ENCODE measurements at regions of chr17 and their contacts with region 1.

Region 1: DNA sequence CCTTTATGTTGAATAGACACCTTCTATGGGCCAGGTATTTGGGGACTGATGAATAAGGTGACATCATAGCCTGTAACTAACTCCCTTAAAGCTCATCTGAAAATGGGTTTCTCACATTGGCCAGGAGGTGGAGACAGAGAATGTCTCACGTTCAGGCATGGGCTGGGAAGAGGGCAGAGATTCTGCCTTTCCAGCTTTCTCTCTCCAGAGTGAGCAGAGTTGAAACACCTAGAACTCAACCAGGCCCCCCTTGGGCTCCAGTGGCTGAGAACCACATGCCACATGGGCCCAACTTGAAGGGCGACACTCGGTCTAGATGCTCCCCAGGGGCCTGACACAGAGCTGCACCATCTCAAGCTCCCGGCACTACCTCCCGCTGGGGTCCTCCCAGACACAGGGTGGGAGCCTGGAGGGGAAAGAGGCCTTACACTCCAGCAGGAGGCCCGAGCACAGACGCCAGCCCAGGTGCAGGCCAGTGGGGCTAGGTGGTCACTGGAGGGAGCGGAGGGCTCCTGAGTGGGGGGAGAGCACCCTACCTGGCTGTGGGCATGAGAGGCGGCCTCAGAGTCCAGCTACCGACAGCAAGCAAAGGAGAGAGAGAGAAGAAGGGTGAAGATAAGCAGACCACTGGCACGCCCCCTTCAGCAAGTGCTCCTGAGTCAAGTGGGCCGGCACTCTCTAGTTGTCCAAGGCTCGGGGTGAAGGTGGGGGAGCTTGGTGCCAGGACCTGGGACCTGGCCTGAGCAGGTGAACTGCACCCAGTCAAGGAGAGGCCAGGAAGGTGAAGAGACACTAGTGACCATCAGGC is 55.9 kb downstream of the MYO18A start:
- DNase-seq: peak; percentile 79
- CTCF ChIP-seq: peak; percentile 68

Region 2: DNA sequence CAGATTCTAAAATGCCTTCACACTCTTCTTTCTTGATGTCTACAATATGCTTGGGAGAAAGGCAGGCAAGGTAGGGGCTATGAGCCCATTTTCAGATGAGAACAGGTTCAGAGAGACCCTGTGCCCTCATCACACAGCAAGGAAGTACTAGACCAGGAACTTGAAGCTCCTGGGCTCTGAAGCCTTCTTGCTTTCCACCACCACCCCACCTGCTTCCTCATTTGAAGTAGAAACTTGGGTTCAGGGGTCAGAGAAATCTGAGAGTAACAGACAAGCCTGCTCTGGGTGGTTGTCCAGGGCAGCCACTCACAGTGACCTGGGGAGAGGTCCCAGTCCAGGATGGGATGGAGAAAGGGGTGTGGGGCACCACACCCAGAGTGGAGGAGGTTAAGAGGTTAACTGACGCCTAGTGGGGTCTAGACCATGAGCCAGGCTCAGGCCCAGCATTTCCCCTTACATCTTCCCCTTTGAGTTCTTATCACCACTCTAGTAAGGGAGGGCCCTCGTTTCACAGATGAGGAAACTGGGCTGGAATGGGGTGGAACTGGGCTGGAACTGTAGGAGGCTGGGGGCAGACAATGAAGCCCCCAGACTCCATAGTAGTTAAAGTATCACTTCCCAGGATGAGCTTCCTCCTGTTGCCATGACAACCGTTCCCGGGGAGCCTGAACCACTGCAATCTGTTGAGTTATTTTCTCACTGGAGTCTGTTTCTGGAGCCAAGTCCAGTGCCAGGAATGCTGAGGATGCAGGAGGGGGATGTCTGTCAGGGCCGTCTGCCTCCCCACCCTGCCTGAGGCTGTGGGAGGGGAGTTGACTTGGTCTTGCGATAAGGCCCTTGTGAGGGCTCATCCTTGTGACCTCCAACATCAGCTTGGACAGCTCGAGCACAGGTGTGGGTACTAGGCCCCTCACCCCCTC is 156.8 kb before region 1 on chr17:
- CTCF ChIA-PET with region 1: interaction called, 346 read pairs
- POLR2A ChIA-PET with region 1: no interaction called
- DNase-seq: no peak
- CTCF ChIP-seq: no peak

Region 3: DNA sequence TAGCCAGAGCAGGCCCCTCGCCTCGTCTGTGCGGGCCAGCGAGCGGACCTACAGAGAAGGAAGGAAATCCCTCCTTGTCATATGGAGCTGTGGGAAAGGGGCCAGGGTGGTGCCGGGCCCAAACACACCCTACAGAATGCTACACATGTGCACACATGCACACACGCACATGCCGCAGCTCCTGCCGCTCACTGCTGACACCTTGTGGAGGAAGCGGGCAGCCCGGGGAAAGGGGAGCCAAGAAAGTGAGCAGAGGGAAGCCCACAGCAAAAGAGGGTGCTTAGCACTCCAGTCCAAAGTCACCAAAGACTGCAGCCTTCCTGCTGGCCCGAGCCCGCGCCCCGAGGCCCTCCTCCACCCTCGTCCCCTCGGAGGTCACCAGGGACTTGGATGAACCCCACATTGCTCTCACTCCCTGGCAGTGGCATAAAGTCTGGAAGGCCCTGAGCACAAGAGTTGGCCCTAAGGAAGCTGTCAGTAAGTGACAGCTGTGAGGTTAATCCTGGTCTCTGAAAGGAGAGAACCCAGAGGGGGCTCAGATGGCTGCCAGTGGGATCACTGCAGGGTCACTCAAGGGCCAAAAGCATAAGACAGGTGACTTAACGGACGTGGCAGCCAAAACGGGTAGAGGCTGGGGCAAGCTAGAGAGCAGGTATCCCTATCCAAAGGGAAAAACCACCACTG is 12.4 kb before region 1 on chr17:
- CTCF ChIA-PET with region 1: interaction called, 89 read pairs
- POLR2A ChIA-PET with region 1: no interaction called
- DNase-seq: peak; percentile 76
- CTCF ChIP-seq: peak; percentile 92

Region 4: GRCh38 chr17:29140051-29140621 is 15.8 kb after region 1 on chr17:
- CTCF ChIA-PET with region 1: interaction called, 47 read pairs
- POLR2A ChIA-PET with region 1: no interaction called
- DNase-seq: peak; percentile 80
- CTCF ChIP-seq: no peak

Region 5: GRCh38 chr17:29180034-29180787 is 55.9 kb after region 1 on chr17 and contains the start of gene MYO18A:
- CTCF ChIA-PET with region 1: interaction called, 16 read pairs
- POLR2A ChIA-PET with region 1: no interaction called
- DNase-seq: peak; percentile 94
- CTCF ChIP-seq: peak; percentile 89

Region 6: DNA sequence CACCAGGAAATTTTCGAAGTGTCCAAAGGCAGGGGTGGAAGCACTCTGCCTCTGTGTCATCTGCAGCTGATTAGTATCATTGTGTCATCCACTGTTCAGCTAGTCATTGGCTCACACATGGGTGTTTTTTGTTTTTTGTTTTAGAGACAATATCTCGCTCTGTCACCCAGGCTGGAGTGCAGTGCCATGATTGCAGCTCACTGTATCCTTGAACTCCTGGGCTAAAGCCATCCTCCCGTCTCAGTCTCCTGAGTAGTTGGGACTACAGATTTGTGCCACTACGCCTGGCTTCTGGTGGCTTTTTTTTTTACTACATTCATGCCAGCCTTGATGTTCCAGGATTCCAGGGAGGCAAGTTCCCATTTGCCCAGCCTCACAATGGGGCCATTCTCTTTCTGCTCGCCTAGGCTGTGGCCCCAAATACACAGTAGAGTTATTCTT is 88.4 kb after region 1 on chr17:
- CTCF ChIA-PET with region 1: interaction called, 18 read pairs
- POLR2A ChIA-PET with region 1: no interaction called
- DNase-seq: no peak
- CTCF ChIP-seq: no peak

Region 7: GRCh38 chr17:29292992-29293889 is 168.9 kb after region 1 on chr17:
- CTCF ChIA-PET with region 1: interaction called, 14 read pairs
- POLR2A ChIA-PET with region 1: interaction called, 3 read pairs
- DNase-seq: peak; percentile 63
- CTCF ChIP-seq: peak; percentile 27

Region 8: GRCh38 chr17:29303386-29303785 is 179.1 kb after region 1 on chr17:
- CTCF ChIA-PET with region 1: no interaction called
- POLR2A ChIA-PET with region 1: no interaction called
- DNase-seq: no peak
- CTCF ChIP-seq: no peak